H1 (cell line): ENCODE measurements at regions of chr10 and their contacts with region 1.

Region 1: DNA sequence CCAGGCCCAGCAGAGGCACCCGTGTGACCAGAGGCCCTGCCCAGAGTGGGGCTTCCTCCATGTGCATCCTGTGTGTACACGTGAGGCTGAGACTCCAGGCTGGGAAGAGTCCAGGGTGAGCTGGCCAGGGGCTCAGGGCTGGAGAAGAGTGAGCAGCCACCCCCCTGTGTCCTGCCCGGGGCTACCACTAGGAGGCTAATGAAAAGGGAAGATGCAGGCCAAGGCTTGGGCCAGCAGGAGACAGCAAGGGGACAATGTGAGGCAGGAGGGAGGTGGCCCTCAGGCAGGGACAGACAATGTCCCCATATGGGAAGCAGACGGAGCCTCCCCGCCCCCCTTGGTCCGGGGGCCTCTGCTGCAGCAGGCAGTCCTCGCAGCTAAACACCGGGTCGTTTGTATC is 102.0 kb downstream of the HIF1AN start:
- DNase-seq: peak; percentile 29 to 87
- H3K4me3 ChIP-seq: no peak overlapping the region; a peak in 1 of 8 replicates
- H3K27ac ChIP-seq: no peak overlapping the region
- H3K4me1 ChIP-seq: peaks cover 8 to 19% (median 12%) of the 10 kb centered on the region in 4 experiments
- H3K27me3 ChIP-seq: peaks cover 0 to 6% (median 2%) of the 10 kb centered on the region in 4 experiments; a peak in 1 of 7 replicates
- CTCF ChIP-seq: peak; percentile 95 to 98 (median 97)
- EP300 ChIP-seq: no peak
- POLR2A ChIP-seq: no peak
- RAD21 ChIP-seq: peak; percentile 60 to 77

Region 2: DNA sequence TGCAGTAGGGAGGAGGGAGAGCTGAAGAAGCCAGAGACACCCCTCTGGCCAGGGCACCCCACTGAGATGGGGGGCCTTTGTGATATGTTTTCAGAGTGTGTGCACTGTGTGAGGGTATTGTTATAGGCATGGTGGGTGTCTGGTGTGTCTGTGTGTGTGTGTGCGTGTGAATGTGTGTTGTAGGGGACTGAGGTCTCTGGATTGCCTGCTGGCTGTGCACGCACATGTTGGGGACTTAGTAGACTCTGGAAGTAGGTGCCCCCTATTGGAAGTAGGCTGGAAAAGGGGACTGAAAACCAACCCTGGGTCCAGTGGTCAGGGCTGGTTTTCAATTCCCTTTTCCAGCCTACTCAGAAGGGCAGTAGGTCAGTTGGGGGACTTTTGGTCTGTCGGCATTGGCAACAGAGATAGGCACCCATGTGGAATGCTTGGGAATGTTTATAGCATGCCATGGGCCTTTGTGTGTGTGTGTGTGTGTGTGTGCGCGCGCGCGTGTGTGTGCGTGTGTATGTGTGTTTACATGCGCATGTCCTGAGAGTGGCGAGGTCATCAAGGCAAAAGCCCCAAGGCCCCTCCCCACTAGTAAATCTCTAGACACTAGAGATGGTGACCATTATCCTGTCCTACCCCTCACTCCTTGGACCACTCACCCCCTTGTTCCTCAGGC is 23.2 kb before region 1 on chr10:
- CTCF ChIA-PET with region 1: interaction called, 18 read pairs
- POLR2A ChIA-PET with region 1: no interaction called
- DNase-seq: no peak
- H3K4me3 ChIP-seq: no peak overlapping the region
- H3K27ac ChIP-seq: no peak overlapping the region
- H3K4me1 ChIP-seq: no peaks in the 10 kb centered on the region; a peak in 1 of 7 replicates
- H3K27me3 ChIP-seq: no peaks in the 10 kb centered on the region; a peak in 1 of 7 replicates
- CTCF ChIP-seq: peak; percentile 9 to 40 (median 10); a peak in 2 of 4 replicates
- EP300 ChIP-seq: no peak
- POLR2A ChIP-seq: no peak
- RAD21 ChIP-seq: no peak; a peak in 1 of 4 replicates

Region 3: GRCh38 chr10:100621360-100622205 is 16.2 kb before region 1 on chr10:
- CTCF ChIA-PET with region 1: interaction called, 70 read pairs
- POLR2A ChIA-PET with region 1: interaction called, 5 read pairs
- DNase-seq: no peak
- H3K4me3 ChIP-seq: no peak overlapping the region
- H3K27ac ChIP-seq: no peak overlapping the region
- H3K4me1 ChIP-seq: peaks cover 5 to 14% (median 8%) of the 10 kb centered on the region in 4 experiments
- H3K27me3 ChIP-seq: no peaks in the 10 kb centered on the region
- CTCF ChIP-seq: no peak
- EP300 ChIP-seq: no peak
- POLR2A ChIP-seq: no peak
- RAD21 ChIP-seq: no peak

Region 4: GRCh38 chr10:100656454-100656853 is 18.7 kb after region 1 on chr10:
- CTCF ChIA-PET with region 1: interaction called, 12 read pairs
- POLR2A ChIA-PET with region 1: interaction called, 8 read pairs
- DNase-seq: peak in 1 of 2 experiments; percentile 79
- H3K4me3 ChIP-seq: peak overlapping the region in 2 of 4 experiments; percentile 51 to 68; a peak in 4 of 8 replicates
- H3K27ac ChIP-seq: no peak overlapping the region
- H3K4me1 ChIP-seq: peaks cover 0 to 20% (median 16%) of the 10 kb centered on the region in 4 experiments; a peak in 6 of 7 replicates
- H3K27me3 ChIP-seq: peaks cover 57 to 90% (median 86%) of the 10 kb centered on the region in 4 experiments
- CTCF ChIP-seq: no peak
- EP300 ChIP-seq: no peak
- POLR2A ChIP-seq: no peak
- RAD21 ChIP-seq: no peak

Region 5: GRCh38 chr10:100664316-100665149 is 26.7 kb after region 1 on chr10:
- CTCF ChIA-PET with region 1: interaction called, 34 read pairs
- POLR2A ChIA-PET with region 1: no interaction called
- DNase-seq: no peak
- H3K4me3 ChIP-seq: no peak overlapping the region
- H3K27ac ChIP-seq: no peak overlapping the region
- H3K4me1 ChIP-seq: peaks cover 6 to 18% (median 13%) of the 10 kb centered on the region in 4 experiments
- H3K27me3 ChIP-seq: peaks cover 15 to 37% (median 32%) of the 10 kb centered on the region in 4 experiments
- CTCF ChIP-seq: no peak
- EP300 ChIP-seq: no peak
- POLR2A ChIP-seq: no peak
- RAD21 ChIP-seq: no peak

Region 6: GRCh38 chr10:100670828-100671479 is 33.2 kb after region 1 on chr10:
- CTCF ChIA-PET with region 1: interaction called, 34 read pairs
- POLR2A ChIA-PET with region 1: no interaction called
- DNase-seq: peak in 1 of 2 experiments; percentile 94
- H3K4me3 ChIP-seq: peak overlapping the region; percentile 22 to 54 (median 36); a peak in 5 of 8 replicates
- H3K27ac ChIP-seq: no peak overlapping the region
- H3K4me1 ChIP-seq: peaks cover 4 to 15% (median 9%) of the 10 kb centered on the region in 4 experiments
- H3K27me3 ChIP-seq: peaks cover 2 to 37% (median 27%) of the 10 kb centered on the region in 4 experiments
- CTCF ChIP-seq: peak; percentile 77 to 87 (median 86)
- EP300 ChIP-seq: no peak
- POLR2A ChIP-seq: no peak
- RAD21 ChIP-seq: peak; percentile 43 to 73